ENCODE measurements at regions of chr9 and their contacts with region 1.

Region 1: DNA sequence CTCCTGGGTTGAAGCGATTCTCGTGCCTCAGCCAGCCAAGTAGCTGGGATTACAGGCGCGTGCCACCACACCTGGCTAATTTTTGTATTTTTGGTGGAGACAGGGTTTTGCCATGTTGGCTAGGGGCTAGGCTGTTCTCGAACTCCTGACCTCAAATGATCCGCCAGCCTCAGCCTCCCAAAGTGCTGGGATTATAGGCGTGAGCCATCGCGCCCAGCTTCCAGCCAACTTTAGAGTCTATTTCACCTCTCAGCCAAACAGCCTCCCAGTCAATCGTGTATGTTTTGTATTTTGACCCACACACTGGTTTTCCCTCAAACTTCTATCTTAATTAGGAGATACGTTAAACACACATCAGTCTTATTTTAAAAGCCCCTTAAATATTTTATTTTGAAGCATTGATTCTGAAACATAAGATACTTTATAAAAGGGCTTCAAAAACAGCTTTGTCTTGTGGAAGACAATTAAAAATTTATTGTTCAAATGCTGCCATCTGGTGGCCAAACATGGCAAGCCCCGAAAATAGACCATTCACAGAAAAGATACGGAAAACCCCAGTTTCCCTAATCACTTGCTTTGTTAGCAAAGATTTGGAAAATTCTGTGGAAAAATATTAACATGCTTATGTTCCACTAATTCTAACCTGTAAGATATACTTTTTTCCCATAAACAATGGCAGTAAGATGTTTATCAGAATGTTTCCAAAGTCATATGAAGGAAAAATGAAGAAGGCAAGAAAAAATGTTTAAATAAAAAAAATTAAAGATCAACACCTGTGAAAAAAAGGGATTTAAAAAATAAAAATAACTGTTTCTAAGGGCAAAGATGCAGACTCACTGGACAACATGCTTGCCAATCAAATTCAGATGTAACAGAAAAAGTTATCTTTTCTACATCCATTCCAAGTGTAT is 33.1 kb downstream of the APTX start:
- DNase-seq: peak in 2 of 5 donors; percentile 29 to 32
- ATAC-seq: peak in 1 of 4 donors; percentile 29
- H3K4me3 ChIP-seq: no peak overlapping the region
- H3K27ac ChIP-seq: no peak overlapping the region
- H3K4me1 ChIP-seq: peaks cover 0 to 10% (median 0%) of the 10 kb centered on the region in 12 donors
- H3K27me3 ChIP-seq: no peaks in the 10 kb centered on the region
- CTCF ChIP-seq: peak; percentile 80 to 94 (median 88)
- POLR2A ChIP-seq: no peak

Region 2: GRCh38 chr9:32371279-32371678 is 597.1 kb before region 1 on chr9:
- intact Hi-C with region 1: loop called in 4 of 10 experiments (anchors 5 kb)
- DNase-seq: no peak
- ATAC-seq: no peak
- H3K4me3 ChIP-seq: no peak overlapping the region
- H3K27ac ChIP-seq: no peak overlapping the region
- H3K4me1 ChIP-seq: no peaks in the 10 kb centered on the region
- H3K27me3 ChIP-seq: peaks cover 0 to 4% (median 0%) of the 10 kb centered on the region in 9 donors
- CTCF ChIP-seq: no peak
- POLR2A ChIP-seq: no peak

Region 3: DNA sequence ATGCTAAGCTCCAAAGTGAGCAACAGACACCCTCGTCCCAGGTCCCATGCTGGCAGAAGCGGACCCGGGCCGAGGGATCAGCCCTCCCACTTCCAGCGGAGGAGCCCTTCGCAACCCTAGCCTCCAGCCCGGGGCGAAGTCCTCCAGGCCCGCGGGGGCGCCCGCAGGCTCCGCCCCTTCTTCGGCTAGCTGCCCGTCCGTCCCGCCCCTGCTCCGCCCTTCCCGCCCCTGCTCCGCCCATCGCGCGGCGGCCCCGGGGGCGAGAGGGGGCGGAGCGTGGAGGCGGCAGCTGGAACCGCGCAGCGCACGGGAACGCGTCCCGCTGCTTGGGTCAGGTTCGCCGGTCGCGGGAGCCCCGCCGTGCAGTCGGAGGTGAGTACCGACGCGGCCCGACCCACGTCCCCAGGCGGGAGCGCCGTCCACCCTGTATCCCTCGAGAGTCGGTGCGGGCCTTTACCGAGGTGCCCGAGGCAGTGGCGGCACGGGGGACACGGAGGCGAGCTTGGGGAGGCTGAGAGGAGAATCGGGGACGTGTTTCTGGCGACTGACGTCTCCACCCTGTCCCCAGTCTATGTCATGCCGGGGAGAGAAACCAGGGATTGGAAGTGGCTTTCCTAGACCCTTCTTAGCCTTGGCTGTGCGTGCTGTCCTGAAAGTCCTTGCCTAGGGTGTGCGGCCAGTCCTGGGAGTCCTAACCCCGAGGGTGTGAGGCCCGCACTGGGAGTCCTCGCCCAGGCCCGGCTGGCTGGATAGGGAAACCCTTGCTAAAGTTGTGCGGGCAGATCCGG is 583.8 kb before region 1 on chr9 and contains the start of gene ACO1:
- intact Hi-C with region 1: loop called (anchors 2 to 5 kb)
- DNase-seq: peak; percentile 92 to 95 (median 94)
- ATAC-seq: peak; percentile 92 to 99 (median 98)
- H3K4me3 ChIP-seq: peak within 1 kb of the TSS; percentile 67 to 91 (median 83)
- H3K27ac ChIP-seq: peak within 1 kb of the TSS; percentile 52 to 93 (median 82)
- H3K4me1 ChIP-seq: peaks cover 0 to 37% (median 19%) of the 10 kb centered on the region in 12 donors
- H3K27me3 ChIP-seq: no peaks in the 10 kb centered on the region
- CTCF ChIP-seq: peak in 4 of 12 donors; percentile 19 to 35 (median 32)
- POLR2A ChIP-seq: peak; percentile 15 to 84
- total RNA-seq, gene ACO1: 44.5 to 68.3 (median 63.3) TPM

Region 4: GRCh38 chr9:32579706-32580331 is 388.5 kb before region 1 on chr9:
- intact Hi-C with region 1: loop called in 4 of 10 experiments (anchors 2 to 5 kb)
- DNase-seq: peak; percentile 36 to 79 (median 54)
- ATAC-seq: peak in 1 of 4 donors; percentile 56
- H3K4me3 ChIP-seq: peak overlapping the region in 2 of 12 donors; percentile 1 to 16
- H3K27ac ChIP-seq: no peak overlapping the region
- H3K4me1 ChIP-seq: peaks cover 0 to 4% (median 0%) of the 10 kb centered on the region in 12 donors
- H3K27me3 ChIP-seq: peaks cover 0 to 10% (median 0%) of the 10 kb centered on the region in 9 donors
- CTCF ChIP-seq: peak; percentile 88 to 97 (median 94)
- POLR2A ChIP-seq: no peak

Region 5: DNA sequence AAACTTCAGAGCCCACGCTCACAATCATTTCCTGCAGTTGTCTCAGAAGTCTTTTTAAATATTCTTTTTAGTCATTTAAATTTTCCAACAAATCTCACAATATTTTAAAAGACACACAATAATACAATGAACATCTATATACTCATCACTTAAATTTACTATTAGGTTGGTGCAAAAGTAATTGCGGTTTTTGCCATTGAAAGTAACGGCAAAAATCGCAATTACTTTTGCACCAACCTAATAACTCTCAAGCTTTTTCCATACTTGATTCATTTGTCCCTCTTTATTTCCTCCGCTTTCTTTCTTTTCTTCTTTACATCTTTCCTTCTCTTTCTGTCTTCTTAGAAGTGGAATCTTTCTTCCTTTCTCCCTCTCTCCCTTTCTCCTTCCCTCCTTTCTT is 204.2 kb before region 1 on chr9:
- intact Hi-C with region 1: loop called in 2 of 10 experiments (anchors 10 kb)
- DNase-seq: no peak
- ATAC-seq: no peak
- H3K4me3 ChIP-seq: no peak overlapping the region
- H3K27ac ChIP-seq: no peak overlapping the region
- H3K4me1 ChIP-seq: no peaks in the 10 kb centered on the region
- H3K27me3 ChIP-seq: peaks cover 0 to 3% (median 0%) of the 10 kb centered on the region in 9 donors
- CTCF ChIP-seq: no peak
- POLR2A ChIP-seq: no peak

Region 6: DNA sequence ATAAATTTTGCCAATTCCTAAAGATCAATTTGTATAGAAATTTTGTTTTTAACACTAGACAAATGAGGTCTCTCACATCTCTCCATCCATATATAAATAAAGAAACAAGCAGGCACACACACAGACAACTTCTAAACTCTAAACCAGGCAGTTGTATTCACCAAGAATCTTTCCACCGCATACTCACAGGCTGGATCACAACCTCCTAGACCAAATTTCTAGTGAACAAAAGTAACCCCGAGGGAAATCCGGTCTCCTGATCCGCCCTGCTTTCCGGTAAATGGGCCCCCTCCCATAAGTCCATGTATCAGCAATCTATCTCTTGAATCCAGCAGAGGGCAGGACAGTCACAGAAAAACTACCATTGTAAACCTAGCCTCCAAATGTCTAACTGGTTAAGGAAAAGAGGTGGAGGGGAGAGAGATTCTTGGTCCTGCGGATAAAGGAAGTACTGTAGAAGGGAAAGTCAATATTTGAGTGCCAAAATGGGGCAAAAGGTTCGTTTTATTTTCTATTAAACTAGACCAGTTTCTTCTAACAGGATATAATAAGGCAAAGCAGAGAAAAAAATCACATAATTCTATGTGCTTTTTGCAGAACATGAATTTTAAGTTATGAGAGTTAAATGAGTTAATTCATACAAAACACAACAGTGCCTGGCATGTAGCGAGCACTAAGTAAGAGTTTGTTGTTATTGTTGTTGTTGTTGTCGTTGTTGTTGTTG is 112.9 kb after region 1 on chr9:
- intact Hi-C with region 1: no loop called
- DNase-seq: peak in 4 of 5 donors; percentile 58 to 75 (median 64)
- ATAC-seq: peak in 3 of 4 donors; percentile 62 to 68 (median 62)
- H3K4me3 ChIP-seq: peak overlapping the region in 2 of 12 donors; percentile 11 to 37
- H3K27ac ChIP-seq: peak overlapping the region in 9 of 12 donors; percentile 9 to 81 (median 44)
- H3K4me1 ChIP-seq: peaks cover 0 to 29% (median 7%) of the 10 kb centered on the region in 12 donors
- H3K27me3 ChIP-seq: no peaks in the 10 kb centered on the region
- CTCF ChIP-seq: peak; percentile 60 to 85 (median 78)
- POLR2A ChIP-seq: no peak

Measured in heart left ventricle (tissue), 16 donors.